Heart right ventricle (tissue), 16 donors: ENCODE measurements at regions of chr11 and their contacts with region 1.

Region 1: GRCh38 chr11:117183724-117184349 is 5.3 kb downstream of the SIDT2 start:
- DNase-seq: no peak
- ATAC-seq: no peak
- H3K4me3 ChIP-seq: no peak overlapping the region
- H3K27ac ChIP-seq: no peak overlapping the region
- H3K4me1 ChIP-seq: peaks cover 14 to 36% (median 23%) of the 10 kb centered on the region in 9 donors
- H3K27me3 ChIP-seq: no peaks in the 10 kb centered on the region
- CTCF ChIP-seq: no peak

Region 2: GRCh38 chr11:116793772-116794097 is 390.1 kb before region 1 on chr11:
- intact Hi-C with region 1: no loop called
- DNase-seq: no peak
- ATAC-seq: no peak
- H3K4me3 ChIP-seq: no peak overlapping the region
- H3K27ac ChIP-seq: no peak overlapping the region
- H3K4me1 ChIP-seq: peaks cover 0 to 20% (median 10%) of the 10 kb centered on the region in 9 donors
- H3K27me3 ChIP-seq: no peaks in the 10 kb centered on the region
- CTCF ChIP-seq: no peak

Region 3: GRCh38 chr11:117199061-117199915 is 15.5 kb after region 1 on chr11 and contains the start of gene TAGLN:
- intact Hi-C with region 1: loop called in 1 of 10 experiments (anchors 2 kb)
- DNase-seq: peak; percentile 78 to 80
- ATAC-seq: peak; percentile 69 to 87 (median 81)
- H3K4me3 ChIP-seq: peak within 1 kb of the TSS; percentile 10 to 65 (median 46)
- H3K27ac ChIP-seq: peak within 1 kb of the TSS; percentile 70 to 92 (median 84)
- H3K4me1 ChIP-seq: peaks cover 1 to 62% (median 31%) of the 10 kb centered on the region in 9 donors
- H3K27me3 ChIP-seq: no peaks in the 10 kb centered on the region
- CTCF ChIP-seq: no peak
- total RNA-seq, gene TAGLN: 71.7 to 215 (median 99.9) TPM